Esophagus muscularis mucosa (tissue), 4 donors: ENCODE measurements at regions of chr7 and their contacts with region 1.

Region 1: DNA sequence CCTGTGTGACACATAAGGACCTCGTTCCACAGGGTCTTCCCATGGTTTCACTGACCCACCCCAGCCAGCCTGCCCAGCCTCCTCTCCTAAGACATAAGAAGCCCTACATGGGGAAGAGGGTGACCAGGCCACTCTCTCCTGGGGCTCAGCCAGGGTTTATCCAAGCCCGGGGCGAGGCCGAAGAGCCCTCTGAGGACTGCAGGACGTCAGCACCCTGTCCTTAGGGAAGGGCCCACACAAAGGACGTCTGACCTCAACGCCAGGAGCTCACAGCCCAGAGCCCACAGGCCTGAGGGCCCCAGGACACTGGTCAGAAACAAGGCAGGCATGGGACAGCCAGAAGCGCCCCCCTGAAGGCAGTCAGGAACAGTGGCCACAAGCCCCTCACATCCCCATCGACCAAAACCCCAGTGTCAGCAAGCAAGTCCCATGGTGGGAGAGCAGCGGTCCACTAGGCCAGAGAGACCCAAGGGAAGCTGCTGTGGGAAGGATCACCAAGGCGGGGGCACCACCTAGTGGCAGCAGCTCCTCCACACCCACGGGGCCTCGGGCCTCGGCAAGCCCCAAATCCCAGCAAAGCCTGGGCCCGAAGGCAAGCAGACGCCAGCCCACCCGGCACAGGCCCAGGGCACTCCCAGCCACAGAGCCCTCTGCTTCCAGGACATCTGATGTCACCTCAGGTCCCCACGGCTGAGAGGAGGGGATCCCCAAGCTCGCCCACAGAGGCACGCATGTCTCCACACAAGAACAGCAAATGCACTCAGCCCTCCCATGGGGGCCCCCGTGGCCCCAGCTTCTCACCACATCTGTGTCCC is 23.4 kb downstream of the MAD1L1 start:
- DNase-seq: no peak
- H3K4me3 ChIP-seq: no peak overlapping the region
- H3K27ac ChIP-seq: no peak overlapping the region
- H3K4me1 ChIP-seq: peaks cover 6 to 26% (median 22%) of the 10 kb centered on the region in 4 donors
- H3K27me3 ChIP-seq: no peaks in the 10 kb centered on the region
- CTCF ChIP-seq: peak; percentile 77 to 85 (median 78)
- EP300 ChIP-seq: no peak
- POLR2A ChIP-seq: no peak

Region 2: GRCh38 chr7:2104107-2104710 is 105.1 kb before region 1 on chr7:
- intact Hi-C with region 1: loop called (anchors 1 kb)
- DNase-seq: peak; percentile 96
- H3K4me3 ChIP-seq: peak overlapping the region; percentile 25 to 41 (median 34)
- H3K27ac ChIP-seq: peak overlapping the region; percentile 60 to 76 (median 62)
- H3K4me1 ChIP-seq: peaks cover 33 to 65% (median 50%) of the 10 kb centered on the region in 4 donors
- H3K27me3 ChIP-seq: no peaks in the 10 kb centered on the region
- CTCF ChIP-seq: peak; percentile 59 to 82 (median 78)
- EP300 ChIP-seq: no peak
- POLR2A ChIP-seq: no peak

Region 3: DNA sequence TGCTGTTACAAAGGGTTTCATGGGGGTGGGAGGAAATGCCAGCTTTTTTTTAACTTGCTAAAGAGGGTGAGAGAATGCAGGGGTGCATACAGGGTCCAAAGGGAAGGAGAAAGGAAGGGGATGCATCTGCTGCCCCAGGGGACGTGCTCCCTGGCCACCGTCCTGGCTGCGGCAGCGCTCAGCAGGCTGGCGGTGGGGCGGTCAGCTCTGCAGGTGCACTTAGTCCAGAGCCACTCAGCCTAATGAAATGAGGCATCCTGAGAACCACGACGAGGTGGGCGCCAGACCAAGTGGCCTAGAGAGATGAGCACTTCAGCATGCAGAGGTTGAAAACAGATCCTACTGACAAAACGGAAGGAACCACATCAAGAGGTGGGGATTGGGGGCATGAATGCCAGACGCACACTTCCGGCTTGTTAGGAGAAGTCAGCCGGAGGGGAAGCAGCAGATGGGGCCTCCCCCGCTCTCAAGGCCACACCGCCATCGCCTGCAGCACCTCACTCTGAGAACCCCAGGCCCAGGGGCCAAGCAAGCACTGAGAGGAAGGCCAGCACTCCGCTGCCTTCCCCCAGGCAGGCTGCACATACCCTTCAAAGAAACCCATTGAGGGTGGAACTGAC is 71.1 kb before region 1 on chr7:
- intact Hi-C with region 1: no loop called
- DNase-seq: no peak
- H3K4me3 ChIP-seq: no peak overlapping the region
- H3K27ac ChIP-seq: no peak overlapping the region
- H3K4me1 ChIP-seq: peaks cover 0 to 14% (median 6%) of the 10 kb centered on the region in 4 donors
- H3K27me3 ChIP-seq: no peaks in the 10 kb centered on the region
- CTCF ChIP-seq: no peak
- EP300 ChIP-seq: no peak
- POLR2A ChIP-seq: no peak

Region 4: DNA sequence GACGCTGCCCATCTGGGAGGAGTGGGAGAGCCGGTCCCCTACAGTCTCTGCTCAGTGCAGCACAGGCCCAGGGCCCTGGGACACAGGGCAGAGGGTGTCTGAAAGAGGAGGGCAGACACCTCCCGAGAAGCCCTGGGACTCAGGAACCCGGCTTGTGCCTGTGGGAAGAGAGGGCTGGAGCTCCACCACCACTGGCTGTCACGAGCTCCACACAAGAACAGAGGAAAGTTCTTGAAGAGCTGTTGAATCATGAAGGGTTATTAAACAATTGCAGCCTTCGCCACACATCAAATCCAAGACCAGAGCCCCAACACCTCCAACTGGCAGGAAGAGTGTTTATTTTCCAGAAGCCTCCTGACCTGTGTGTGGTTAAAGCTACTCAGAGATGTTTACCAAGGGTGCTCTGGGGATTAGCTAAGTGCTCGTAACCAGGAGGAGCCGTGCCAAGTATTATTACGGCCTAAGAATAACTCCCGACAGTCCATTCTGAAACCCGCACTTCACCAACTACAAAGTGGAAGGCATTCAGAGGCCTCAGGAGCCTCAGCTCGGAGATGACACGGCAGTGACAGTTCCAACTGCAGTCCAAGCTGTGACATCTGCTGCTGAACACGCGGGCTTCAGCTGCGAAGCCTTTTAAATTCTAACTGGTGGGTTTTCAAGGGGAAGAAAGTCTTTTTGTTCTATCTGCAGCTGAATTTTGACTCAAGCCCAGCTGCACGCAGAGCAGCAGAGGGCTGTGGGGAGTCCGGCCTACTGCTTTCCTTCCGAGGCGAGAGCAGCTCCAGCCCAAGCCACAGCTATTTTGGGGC is 51.7 kb before region 1 on chr7:
- intact Hi-C with region 1: loop called (anchors 5 kb)
- DNase-seq: peak; percentile 95
- H3K4me3 ChIP-seq: no peak overlapping the region
- H3K27ac ChIP-seq: peak overlapping the region; percentile 75 to 86 (median 84)
- H3K4me1 ChIP-seq: peaks cover 19 to 46% (median 34%) of the 10 kb centered on the region in 4 donors
- H3K27me3 ChIP-seq: no peaks in the 10 kb centered on the region
- CTCF ChIP-seq: no peak
- EP300 ChIP-seq: peak; percentile 48
- POLR2A ChIP-seq: no peak

Region 5: DNA sequence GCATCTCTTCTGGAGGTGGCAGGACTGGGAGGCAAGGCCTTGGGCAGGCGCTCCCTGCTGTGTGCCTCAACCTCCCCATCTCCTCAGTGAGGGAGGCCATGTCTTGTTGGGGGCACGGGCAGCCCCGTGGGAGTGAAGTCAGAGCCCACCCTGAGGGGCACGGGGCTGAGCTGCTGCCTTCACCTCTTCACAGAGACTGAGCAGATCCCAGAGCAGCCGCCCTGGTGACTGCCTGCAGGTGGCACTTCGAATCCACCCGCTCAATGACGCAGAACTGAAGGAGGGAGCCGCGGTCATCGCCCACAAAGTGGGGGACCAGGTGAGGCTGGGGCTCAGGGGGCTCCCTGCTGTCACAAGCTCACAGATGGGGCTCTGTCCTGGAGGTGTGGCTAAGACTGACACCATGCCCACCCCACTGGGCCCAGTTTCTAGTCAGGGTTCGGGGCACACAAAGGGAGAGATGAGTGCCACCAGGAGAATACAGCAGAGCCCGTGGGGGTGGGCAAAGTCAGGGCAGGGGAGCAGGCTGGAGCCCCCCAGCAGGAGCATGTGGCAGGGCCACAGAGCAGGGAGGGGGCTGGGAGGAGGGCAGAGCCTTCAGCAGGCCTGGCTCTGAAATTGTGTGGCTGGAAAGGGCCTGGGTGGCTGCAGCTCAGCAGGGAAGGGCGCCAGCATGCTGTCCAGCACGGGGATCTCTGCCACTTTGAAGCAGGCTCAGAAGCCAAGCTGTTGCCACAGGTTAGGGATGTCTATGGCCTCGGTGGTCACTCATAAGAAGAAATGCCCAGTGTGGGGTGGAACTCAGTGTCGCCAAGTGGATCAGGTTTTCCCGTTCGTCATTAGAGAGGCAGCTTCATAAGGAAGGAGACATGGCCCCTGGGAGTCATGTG is 175.2 kb after region 1 on chr7:
- intact Hi-C with region 1: no loop called
- DNase-seq: no peak
- H3K4me3 ChIP-seq: no peak overlapping the region
- H3K27ac ChIP-seq: no peak overlapping the region
- H3K4me1 ChIP-seq: peaks cover 0 to 5% (median 2%) of the 10 kb centered on the region in 4 donors
- H3K27me3 ChIP-seq: no peaks in the 10 kb centered on the region
- CTCF ChIP-seq: no peak
- EP300 ChIP-seq: no peak
- POLR2A ChIP-seq: no peak

Region 6: DNA sequence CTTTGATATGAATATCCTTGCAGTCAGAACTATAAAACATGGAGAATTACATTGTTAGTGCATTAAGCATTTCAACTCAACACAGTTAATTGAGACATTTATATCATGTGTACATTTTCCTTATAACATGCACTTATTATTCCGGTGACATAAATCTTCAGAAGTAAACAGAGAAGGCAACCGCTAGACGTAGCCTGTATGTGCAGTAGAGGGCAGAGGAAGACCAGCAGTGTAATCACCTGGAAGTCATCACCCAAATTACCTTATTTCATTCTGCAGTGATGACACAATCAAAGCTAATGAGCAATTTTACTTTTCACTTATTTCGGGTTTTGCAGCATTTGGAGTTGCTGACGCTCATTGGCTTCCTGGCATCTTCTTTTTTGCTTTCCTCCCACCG is 1486.2 kb after region 1 on chr7:
- intact Hi-C with region 1: no loop called
- DNase-seq: no peak
- H3K4me3 ChIP-seq: no peak overlapping the region
- H3K27ac ChIP-seq: no peak overlapping the region
- H3K4me1 ChIP-seq: no peaks in the 10 kb centered on the region
- H3K27me3 ChIP-seq: no peaks in the 10 kb centered on the region
- CTCF ChIP-seq: peak in 1 of 3 experiments; percentile 12
- EP300 ChIP-seq: no peak
- POLR2A ChIP-seq: no peak